Activated CD4-positive, alpha-beta T cell treated with anti-CD3 and anti-CD28 coated beads for 36 hours (primary cell): ENCODE measurements at regions of chr6 and their contacts with region 1.

Region 1: GRCh38 chr6:41895300-41896233 is at the start of gene USP49:
- DNase-seq: peak; percentile 96
- ATAC-seq: peak; percentile 92
- H3K4me3 Mint-ChIP-seq: no peak within 1 kb of the TSS
- H3K27ac Mint-ChIP-seq: peak within 1 kb of the TSS; percentile 95
- H3K4me1 Mint-ChIP-seq: peaks cover 13% of the 10 kb centered on the region
- H3K27me3 Mint-ChIP-seq: no peaks in the 10 kb centered on the region
- total RNA-seq, gene USP49: 5.6 to 7.3 TPM

Region 2: DNA sequence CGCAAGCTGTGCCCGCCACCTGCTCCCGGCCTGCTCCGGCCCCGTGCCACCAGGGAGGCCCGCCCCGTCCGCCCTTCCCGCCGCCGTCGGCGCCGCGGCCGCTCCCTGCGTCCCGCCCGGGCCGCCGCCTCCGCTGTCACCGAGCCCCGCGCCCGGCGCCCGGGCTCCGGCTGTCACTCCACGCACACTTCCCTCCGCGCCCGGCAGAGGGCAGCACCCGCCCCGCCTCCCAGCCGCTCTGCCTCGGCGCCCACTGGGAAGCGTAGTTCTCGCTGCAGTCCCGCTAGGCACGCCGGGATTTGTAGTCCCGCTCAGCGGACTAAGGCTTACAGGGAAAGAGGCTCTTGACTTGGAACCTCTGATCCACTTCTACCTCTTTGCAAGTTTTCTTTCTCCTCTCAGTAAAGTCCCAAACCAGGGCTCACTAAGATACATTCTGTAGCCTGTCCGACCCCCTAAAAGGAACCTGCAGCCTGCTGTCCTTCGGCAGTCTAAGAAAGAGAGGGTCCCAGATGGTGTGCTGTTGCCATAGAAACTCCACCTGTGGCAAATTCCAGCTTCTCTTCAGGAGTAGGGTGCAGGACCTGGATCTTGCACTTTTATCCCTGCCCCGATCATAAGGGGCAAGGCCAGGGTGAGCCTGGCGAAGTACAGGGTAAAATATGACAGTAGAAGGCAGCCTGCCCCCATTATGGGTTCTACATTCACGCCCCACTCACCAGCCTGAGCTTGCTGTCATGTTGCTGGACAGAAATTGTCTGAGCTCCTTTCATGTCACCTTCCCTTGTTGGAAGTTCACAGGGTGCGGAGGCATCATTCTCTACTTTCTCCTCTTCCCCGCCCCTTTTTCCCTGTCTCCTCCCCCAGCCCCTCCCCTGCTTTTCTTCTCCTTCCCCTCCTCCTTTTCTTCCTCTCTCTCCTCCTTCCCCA is 159.9 kb before region 1 on chr6 and contains the start of gene TFEB:
- CTCF ChIA-PET with region 1: no interaction called
- POLR2A ChIA-PET with region 1: no interaction called
- intact Hi-C with region 1: loop called in 1 of 2 experiments (anchors 1 kb)
- DNase-seq: peak; percentile 97
- ATAC-seq: peak; percentile 76
- H3K4me3 Mint-ChIP-seq: peak within 1 kb of the TSS; percentile 74
- H3K27ac Mint-ChIP-seq: peak within 1 kb of the TSS; percentile 42
- H3K4me1 Mint-ChIP-seq: peaks cover 29% of the 10 kb centered on the region
- H3K27me3 Mint-ChIP-seq: no peaks in the 10 kb centered on the region
- total RNA-seq, gene TFEB: 8.5 to 9.2 TPM

Region 3: DNA sequence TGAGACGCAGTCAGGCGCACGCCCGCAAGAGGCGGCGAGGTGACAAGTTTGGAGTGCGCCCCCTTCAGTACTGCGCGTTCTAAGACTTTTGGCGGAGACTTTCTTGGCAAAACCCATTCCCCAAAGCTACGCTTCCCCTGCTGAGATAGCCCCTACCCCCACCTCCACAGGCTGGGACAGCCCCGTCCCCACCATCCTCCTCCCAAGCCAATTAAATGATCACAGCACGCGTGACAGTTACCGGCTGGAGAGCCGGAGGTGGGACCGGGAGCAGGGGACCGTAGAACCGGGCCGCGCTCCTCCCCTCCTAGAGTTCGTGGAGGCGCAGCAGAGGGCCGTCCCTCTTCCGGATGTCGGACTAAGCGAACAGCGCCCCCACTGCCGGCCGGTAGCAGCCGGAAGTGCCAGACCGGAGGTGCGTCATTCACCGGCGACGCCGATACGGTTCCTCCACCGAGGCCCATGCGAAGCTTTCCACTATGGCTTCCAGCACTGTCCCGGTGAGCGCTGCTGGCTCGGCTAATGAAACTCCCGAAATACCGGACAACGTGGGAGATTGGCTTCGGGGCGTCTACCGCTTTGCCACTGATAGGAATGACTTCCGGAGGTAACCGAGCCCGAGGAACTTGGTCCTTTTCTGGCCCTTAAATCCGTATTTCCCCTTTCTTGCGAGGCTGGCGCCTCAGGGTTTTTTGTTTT is 108.2 kb before region 1 on chr6 and contains the start of gene TOMM6:
- CTCF ChIA-PET with region 1: interaction called, 6 read pairs
- POLR2A ChIA-PET with region 1: no interaction called
- intact Hi-C with region 1: loop called (anchors 1 kb)
- DNase-seq: peak; percentile 98
- ATAC-seq: peak; percentile 86
- H3K4me3 Mint-ChIP-seq: peak within 1 kb of the TSS; percentile 96
- H3K27ac Mint-ChIP-seq: peak within 1 kb of the TSS; percentile 98
- H3K4me1 Mint-ChIP-seq: peaks cover 19% of the 10 kb centered on the region
- H3K27me3 Mint-ChIP-seq: peaks cover 2% of the 10 kb centered on the region
- total RNA-seq, gene TOMM6: 282 to 345 TPM

Region 4: GRCh38 chr6:41846666-41847237 is 48.8 kb before region 1 on chr6:
- CTCF ChIA-PET with region 1: interaction called, 3 read pairs
- POLR2A ChIA-PET with region 1: no interaction called
- intact Hi-C with region 1: loop called in 1 of 2 experiments (anchors 5 kb)
- DNase-seq: peak; percentile 67
- ATAC-seq: peak; percentile 85
- H3K4me3 Mint-ChIP-seq: no peak overlapping the region
- H3K27ac Mint-ChIP-seq: no peak overlapping the region
- H3K4me1 Mint-ChIP-seq: peaks cover 5% of the 10 kb centered on the region
- H3K27me3 Mint-ChIP-seq: no peaks in the 10 kb centered on the region

Region 5: DNA sequence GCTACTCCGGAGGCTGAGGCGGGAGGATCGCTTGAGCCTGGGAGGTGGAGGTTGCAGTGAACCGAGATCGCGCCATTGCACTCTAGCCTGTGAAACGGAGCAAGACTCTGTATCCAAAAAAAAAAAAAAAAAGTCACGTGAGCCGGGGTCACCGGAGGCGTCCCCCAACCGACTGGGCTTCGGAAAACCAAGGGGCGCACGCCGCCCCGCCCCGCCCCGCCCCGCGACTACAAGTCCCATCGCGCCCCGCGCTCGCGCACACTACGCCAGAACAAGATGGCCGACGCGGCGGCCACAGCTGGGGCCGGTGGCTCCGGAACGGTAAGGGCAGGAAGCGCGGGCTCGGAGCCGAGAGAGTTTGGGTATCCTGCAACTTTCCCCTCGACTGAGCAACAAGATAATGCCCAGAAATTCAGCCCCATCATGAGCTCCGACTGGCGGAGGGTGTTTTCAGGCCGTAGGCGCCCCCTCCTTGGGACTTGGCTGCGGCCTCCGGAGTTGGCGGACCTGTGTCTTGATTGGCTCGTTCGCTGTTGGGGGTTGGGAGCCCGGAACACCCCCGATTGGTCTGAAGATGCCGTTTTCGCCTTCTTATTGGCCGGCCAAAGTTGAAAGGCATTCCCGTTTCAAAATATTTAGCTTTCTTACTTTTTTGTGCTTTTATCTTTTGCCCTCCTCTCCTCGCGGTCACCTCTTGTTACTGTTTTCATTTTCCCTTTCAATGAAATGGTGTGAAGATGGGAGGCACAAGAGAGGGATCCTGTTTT is 154.9 kb after region 1 on chr6 and contains the start of gene TAF8:
- CTCF ChIA-PET with region 1: interaction called, 9 read pairs
- POLR2A ChIA-PET with region 1: interaction called, 6 read pairs
- intact Hi-C with region 1: loop called in 1 of 2 experiments (anchors 1 kb)
- DNase-seq: peak; percentile 94
- ATAC-seq: peak; percentile 76
- H3K4me3 Mint-ChIP-seq: peak within 1 kb of the TSS; percentile 88
- H3K27ac Mint-ChIP-seq: peak within 1 kb of the TSS; percentile 96
- H3K4me1 Mint-ChIP-seq: peaks cover 64% of the 10 kb centered on the region
- H3K27me3 Mint-ChIP-seq: no peaks in the 10 kb centered on the region
- total RNA-seq, gene TAF8: 52.3 to 53.1 TPM